ENCODE measurements at regions of chr4 and their contacts with region 1.

Region 1: DNA sequence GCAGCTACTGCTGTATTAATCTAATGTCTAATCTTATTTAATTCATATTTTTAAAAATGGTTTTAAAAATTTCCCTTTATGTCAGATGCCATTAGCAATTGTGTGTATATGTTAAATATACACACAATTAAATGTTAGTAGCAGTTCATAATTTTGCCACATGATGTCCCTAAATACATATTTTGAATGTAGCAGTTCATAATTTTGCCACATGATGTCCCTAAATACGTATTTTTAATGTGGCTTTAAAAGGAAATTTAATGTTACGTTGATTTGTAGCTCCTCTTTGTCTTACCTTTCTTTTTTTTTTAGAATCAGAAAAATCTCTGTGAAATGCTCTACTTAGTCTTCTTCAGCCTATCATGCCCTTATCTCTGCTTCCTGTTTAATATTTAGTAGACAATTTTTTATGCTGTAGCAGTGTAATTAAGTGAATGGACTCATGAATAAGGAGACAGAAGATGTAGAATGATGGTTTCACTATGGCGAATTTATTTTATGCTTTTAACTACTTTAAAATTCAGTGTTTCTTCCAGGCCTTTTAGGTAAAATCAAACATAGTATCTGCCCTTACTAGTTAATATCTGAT is 26.1 kb downstream of the RBM46 start:
- DNase-seq: peak; percentile 24
- H3K4me3 ChIP-seq: peak overlapping the region in 1 of 2 experiments; percentile 1; a peak in 1 of 4 replicates
- H3K27ac ChIP-seq: no peak overlapping the region
- H3K4me1 ChIP-seq: no peaks in the 10 kb centered on the region; a peak in 1 of 4 replicates
- H3K27me3 ChIP-seq: no peaks in the 10 kb centered on the region
- CTCF ChIP-seq: peak; percentile 86
- EP300 ChIP-seq: no peak
- RAD21 ChIP-seq: peak; percentile 84

Region 2: DNA sequence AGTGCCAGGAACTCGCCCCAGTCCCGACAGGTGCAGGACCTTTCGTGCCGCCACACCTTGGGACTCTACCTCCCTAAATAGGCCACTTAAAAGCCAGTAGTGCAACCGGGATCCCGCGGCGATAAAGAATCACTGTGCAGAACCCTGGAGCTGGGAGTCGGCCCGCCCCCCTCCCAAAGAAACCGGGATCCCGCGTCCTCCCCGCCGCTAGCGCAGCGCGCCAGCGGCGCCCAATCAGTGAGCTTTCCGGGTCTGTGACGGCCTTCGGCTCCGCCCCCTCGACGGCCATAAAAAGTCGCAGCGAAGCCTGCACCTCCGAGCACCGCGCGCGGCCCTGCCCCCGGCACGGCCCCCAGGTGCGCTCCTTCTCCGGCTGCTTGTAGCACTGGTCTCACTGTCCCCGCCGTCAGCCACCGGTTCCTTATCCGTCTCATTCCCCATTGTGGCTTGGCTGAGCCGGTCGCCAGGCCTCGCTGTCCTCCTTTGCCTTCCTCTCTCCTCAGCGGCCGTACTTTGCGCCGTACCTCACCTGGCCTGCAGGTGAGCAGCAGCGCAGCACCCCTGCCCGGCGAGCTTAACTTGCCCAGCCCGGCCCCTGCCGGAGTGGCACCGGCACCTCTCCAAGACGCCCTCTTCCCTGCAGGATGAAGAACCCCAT is 63.3 kb before region 1 on chr4 and contains the start of gene LRAT:
- CTCF ChIA-PET with region 1: no interaction called
- POLR2A ChIA-PET with region 1: no interaction called
- DNase-seq: peak; percentile 68
- H3K4me3 ChIP-seq: no peak within 1 kb of the TSS; a peak in 1 of 4 replicates
- H3K27ac ChIP-seq: no peak within 1 kb of the TSS
- H3K4me1 ChIP-seq: no peaks in the 10 kb centered on the region; a peak in 1 of 4 replicates
- H3K27me3 ChIP-seq: peaks cover 54% of the 10 kb centered on the region
- CTCF ChIP-seq: no peak
- EP300 ChIP-seq: no peak
- RAD21 ChIP-seq: no peak
- polyA plus RNA-seq, gene LRAT: not detected in 2 replicates

Region 3: DNA sequence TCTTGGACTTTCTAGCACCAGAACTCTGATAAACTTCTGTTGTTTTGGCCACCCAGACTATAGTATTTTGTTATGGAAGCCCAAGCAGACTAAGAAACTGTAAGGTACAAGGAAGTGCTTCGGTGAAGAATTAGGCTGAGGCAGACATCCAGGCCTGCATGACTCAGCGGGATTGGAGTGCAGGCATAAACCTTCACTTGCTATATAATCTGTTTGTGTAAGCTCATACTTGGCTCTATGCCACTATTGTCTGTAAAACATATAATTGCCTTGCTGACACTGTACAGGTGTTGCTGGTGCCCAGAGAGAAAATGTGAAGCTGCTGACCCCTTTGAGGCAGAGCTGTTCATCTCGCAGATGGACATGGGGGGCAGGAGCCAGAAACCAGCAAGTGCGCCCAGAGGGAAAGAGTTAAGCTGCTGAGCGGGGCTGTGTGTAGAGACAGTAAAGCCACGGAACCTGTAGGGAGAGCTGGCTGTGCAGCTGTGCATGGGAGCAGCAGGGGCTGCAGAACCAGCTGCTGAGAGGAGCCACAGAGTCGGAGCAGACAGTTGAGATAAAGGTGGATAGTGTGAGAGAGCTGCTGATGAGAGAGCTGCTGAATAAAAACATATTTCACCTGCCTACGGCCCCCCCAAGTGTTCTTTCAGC is 70.1 kb after region 1 on chr4:
- CTCF ChIA-PET with region 1: no interaction called
- POLR2A ChIA-PET with region 1: no interaction called
- DNase-seq: no peak
- H3K4me3 ChIP-seq: no peak overlapping the region
- H3K27ac ChIP-seq: no peak overlapping the region
- H3K4me1 ChIP-seq: peaks cover 0 to 3% of the 10 kb centered on the region in 2 experiments; a peak in 1 of 4 replicates
- H3K27me3 ChIP-seq: no peaks in the 10 kb centered on the region
- CTCF ChIP-seq: no peak
- EP300 ChIP-seq: no peak
- RAD21 ChIP-seq: no peak

Region 4: GRCh38 chr4:154928640-154929257 is 121.6 kb after region 1 on chr4:
- CTCF ChIA-PET with region 1: interaction called, 36 read pairs
- POLR2A ChIA-PET with region 1: no interaction called
- DNase-seq: peak; percentile 31
- H3K4me3 ChIP-seq: no peak overlapping the region; a peak in 1 of 4 replicates
- H3K27ac ChIP-seq: no peak overlapping the region
- H3K4me1 ChIP-seq: no peaks in the 10 kb centered on the region
- H3K27me3 ChIP-seq: no peaks in the 10 kb centered on the region
- CTCF ChIP-seq: peak; percentile 31
- EP300 ChIP-seq: no peak
- RAD21 ChIP-seq: peak; percentile 67

Region 5: DNA sequence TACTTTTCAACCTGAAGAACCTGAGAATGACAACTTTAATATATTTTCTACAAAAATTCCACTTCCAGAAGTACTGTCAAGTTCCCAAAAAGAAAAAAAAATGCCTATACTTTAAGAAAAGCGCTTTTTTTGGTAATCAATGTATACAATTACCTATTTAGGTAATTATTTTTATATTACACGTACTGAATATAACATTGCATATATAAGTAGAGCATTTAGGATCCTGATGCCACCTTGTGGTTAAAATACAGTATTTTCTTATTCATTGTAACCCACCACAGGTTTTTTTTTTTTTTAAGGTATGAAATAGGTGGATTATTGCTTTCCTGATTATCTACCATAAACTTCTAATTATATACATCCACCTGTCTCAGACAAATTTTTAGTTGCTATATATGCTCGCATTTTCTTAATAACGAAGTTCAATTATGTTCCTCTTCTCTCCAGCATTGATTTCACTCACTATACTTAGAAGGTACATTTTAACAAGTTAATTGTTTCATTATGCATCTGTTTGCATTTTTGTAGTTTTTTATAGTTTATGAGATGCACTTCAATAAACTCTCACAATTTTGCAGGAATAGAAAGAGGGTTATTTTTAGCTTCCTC is 564.4 kb after region 1 on chr4:
- CTCF ChIA-PET with region 1: interaction called, 20 read pairs
- POLR2A ChIA-PET with region 1: no interaction called
- DNase-seq: peak; percentile 35
- H3K4me3 ChIP-seq: no peak overlapping the region
- H3K27ac ChIP-seq: no peak overlapping the region
- H3K4me1 ChIP-seq: peaks cover 3 to 4% of the 10 kb centered on the region in 2 experiments; a peak in 2 of 4 replicates
- H3K27me3 ChIP-seq: no peaks in the 10 kb centered on the region
- CTCF ChIP-seq: peak; percentile 76
- EP300 ChIP-seq: no peak
- RAD21 ChIP-seq: peak; percentile 65

Region 6: DNA sequence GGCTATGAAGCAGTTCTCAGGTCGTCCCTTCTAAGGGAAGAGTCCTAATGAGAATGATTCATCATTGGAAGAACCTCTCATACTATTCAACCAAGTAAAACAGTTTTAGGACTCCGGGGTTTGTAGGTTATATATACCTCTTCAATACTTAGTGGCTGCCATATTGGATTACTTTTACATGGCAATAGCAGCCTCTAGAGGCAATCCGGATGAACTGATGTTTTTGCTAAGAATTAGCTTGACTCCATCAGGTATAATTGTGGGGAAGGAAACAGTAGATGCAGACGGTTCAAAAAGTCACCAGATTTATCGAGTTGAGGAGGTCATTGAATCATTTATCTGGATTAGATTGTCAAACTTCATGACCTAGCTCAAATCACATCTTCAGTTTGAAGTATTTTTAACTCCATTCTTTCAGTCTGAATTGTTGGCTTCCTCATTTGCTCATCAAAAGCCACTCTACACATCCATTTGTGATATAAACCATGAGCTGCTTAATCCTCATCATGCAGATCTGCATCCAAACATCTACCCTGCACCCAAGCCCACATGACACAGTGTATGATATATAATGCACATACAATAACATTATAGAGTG is 980.1 kb after region 1 on chr4:
- CTCF ChIA-PET with region 1: interaction called, 14 read pairs
- POLR2A ChIA-PET with region 1: no interaction called
- DNase-seq: peak; percentile 65
- H3K4me3 ChIP-seq: no peak overlapping the region; a peak in 1 of 4 replicates
- H3K27ac ChIP-seq: no peak overlapping the region
- H3K4me1 ChIP-seq: no peaks in the 10 kb centered on the region; a peak in 1 of 4 replicates
- H3K27me3 ChIP-seq: no peaks in the 10 kb centered on the region
- CTCF ChIP-seq: peak; percentile 87
- EP300 ChIP-seq: no peak
- RAD21 ChIP-seq: peak; percentile 96

Measured in SK-N-SH (cell line).